Posterior vena cava (tissue), 2 donors: ENCODE measurements at regions of chr5 and their contacts with region 1.

Region 1: DNA sequence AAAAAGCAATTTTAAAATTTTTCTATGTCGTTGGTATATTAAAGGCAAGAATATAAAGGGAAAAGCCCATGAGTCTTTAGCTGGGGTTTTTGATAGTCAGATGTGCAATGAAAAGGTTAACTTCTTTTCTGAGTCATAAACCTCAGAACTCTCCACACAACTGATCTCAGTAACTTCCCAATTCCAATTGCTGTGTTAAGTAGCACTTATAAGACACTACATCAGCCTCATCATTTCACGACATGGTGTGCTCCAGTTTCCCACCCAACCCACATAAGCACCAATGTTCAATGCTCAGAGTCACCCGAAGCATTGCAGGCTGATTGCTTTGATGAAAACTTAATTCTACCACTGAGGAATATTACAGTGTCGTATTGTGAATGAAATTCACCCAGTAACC is 155.8 kb downstream of the TSSK1B start:
- DNase-seq: no peak

Region 2: DNA sequence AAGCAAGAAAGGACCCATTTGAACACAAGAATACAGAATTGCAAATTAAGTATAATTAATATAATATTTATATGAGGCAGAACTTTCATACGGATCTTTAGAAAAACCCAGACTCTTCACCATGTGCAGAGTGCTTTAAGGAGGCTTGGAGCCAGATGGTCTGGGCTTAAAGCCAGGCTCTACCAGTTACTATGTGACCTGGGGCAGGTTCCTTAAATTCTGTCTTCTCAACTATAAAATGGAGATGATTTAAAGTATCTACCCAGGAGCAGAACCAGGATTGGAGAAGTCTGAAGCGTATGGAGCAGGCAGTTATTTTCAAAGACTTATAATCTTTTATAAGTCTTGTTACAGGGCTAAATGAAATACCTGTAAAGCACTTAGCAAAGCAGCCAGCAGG is 46.3 kb before region 1 on chr5:
- intact Hi-C with region 1: no loop called
- DNase-seq: no peak

Region 3: GRCh38 chr5:113242481-113243348 is 36.3 kb before region 1 on chr5:
- intact Hi-C with region 1: loop called in 1 of 2 experiments (anchors 1 kb)
- DNase-seq: no peak